ENCODE measurements at regions of chrX and their contacts with region 1.

Region 1: DNA sequence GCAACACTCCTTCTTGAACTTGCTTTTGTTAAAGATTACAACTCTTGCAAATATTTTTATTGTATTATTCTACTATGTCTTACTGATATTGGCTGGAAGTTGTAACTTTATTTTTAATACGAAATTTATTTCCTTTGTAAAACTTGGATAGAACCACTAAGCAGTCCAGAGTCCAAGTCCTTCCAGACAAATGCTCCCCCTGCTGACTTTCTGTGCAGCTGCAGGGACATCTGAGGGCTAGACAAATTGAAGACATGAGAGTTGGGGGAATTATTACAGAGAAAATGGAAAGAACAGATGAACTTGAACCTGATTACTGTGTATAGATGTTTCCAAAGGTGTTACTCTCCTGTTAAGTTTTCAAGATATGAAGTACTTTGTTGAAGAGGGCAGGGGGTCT is 238.8 kb downstream of the GRIA3 start:
- DNase-seq: peak in 1 of 5 donors; percentile 15
- ATAC-seq: peak in 1 of 4 donors; percentile 44
- H3K4me3 ChIP-seq: no peak overlapping the region
- H3K27ac ChIP-seq: no peak overlapping the region
- H3K4me1 ChIP-seq: no peaks in the 10 kb centered on the region
- H3K27me3 ChIP-seq: no peaks in the 10 kb centered on the region
- CTCF ChIP-seq: peak; percentile 17 to 68 (median 52)
- POLR2A ChIP-seq: no peak

Region 2: GRCh38 chrX:123173833-123174232 is 249.0 kb before region 1 on chrX:
- intact Hi-C with region 1: loop called in 1 of 10 experiments (anchors 5 kb)
- DNase-seq: no peak
- ATAC-seq: no peak
- H3K4me3 ChIP-seq: no peak overlapping the region
- H3K27ac ChIP-seq: no peak overlapping the region
- H3K4me1 ChIP-seq: no peaks in the 10 kb centered on the region
- H3K27me3 ChIP-seq: no peaks in the 10 kb centered on the region
- CTCF ChIP-seq: no peak
- POLR2A ChIP-seq: no peak

Region 3: DNA sequence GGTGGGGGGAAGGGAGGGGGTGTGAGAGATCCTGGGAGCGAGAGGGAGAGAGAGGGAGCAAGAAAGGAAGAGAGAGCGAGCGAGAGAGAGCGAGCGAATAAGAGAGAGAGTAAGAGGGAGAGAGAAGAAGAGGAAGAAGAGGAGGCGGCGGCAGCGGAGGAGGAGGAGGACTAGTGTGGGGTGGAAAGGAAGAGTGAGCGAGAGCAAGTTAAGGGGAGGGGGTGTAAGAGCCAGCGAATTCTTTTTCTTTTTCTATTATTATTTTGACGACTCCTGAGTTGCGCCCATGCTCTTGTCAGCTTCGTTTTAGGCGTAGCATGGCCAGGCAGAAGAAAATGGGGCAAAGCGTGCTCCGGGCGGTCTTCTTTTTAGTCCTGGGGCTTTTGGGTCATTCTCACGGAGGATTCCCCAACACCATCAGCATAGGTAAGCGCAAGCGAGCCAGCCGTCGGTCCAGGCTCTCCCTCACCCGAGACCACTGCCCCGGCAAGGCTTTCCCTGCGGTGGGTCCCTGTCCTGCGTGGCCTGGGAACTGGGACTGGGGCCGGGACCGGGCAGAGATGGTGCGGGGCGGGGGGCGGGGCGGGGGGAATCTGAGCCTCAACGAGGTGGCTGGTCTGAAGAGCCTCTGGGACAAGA is 238.5 kb before region 1 on chrX and contains the start of gene GRIA3:
- intact Hi-C with region 1: loop called in 2 of 10 experiments (anchors 10 kb)
- DNase-seq: no peak
- ATAC-seq: peak in 3 of 4 donors; percentile 21 to 42 (median 29)
- H3K4me3 ChIP-seq: peak within 1 kb of the TSS; percentile 6 to 59 (median 42)
- H3K27ac ChIP-seq: no peak within 1 kb of the TSS
- H3K4me1 ChIP-seq: peaks cover 0 to 3% (median 0%) of the 10 kb centered on the region in 12 donors
- H3K27me3 ChIP-seq: peaks cover 0 to 24% (median 0%) of the 10 kb centered on the region in 9 donors
- CTCF ChIP-seq: no peak
- POLR2A ChIP-seq: no peak
- total RNA-seq, gene GRIA3: 0.24 to 12.9 (median 1.3) TPM

Region 4: GRCh38 chrX:123291623-123292022 is 131.3 kb before region 1 on chrX:
- intact Hi-C with region 1: no loop called
- DNase-seq: no peak
- ATAC-seq: no peak
- H3K4me3 ChIP-seq: no peak overlapping the region
- H3K27ac ChIP-seq: no peak overlapping the region
- H3K4me1 ChIP-seq: no peaks in the 10 kb centered on the region
- H3K27me3 ChIP-seq: no peaks in the 10 kb centered on the region
- CTCF ChIP-seq: no peak
- POLR2A ChIP-seq: no peak

Region 5: GRCh38 chrX:123489011-123489410 is 66.1 kb after region 1 on chrX:
- intact Hi-C with region 1: no loop called
- DNase-seq: no peak
- ATAC-seq: no peak
- H3K4me3 ChIP-seq: no peak overlapping the region
- H3K27ac ChIP-seq: no peak overlapping the region
- H3K4me1 ChIP-seq: no peaks in the 10 kb centered on the region
- H3K27me3 ChIP-seq: no peaks in the 10 kb centered on the region
- CTCF ChIP-seq: no peak
- POLR2A ChIP-seq: no peak

Measured in heart left ventricle (tissue), 16 donors.